Cardiac septum (tissue), 1 donor: ENCODE measurements at regions of chr2 and their contacts with region 1.

Region 1: GRCh38 chr2:100242891-100243619 is 79.2 kb downstream of the LONRF2 start:
- DNase-seq: peak; percentile 82

Region 2: DNA sequence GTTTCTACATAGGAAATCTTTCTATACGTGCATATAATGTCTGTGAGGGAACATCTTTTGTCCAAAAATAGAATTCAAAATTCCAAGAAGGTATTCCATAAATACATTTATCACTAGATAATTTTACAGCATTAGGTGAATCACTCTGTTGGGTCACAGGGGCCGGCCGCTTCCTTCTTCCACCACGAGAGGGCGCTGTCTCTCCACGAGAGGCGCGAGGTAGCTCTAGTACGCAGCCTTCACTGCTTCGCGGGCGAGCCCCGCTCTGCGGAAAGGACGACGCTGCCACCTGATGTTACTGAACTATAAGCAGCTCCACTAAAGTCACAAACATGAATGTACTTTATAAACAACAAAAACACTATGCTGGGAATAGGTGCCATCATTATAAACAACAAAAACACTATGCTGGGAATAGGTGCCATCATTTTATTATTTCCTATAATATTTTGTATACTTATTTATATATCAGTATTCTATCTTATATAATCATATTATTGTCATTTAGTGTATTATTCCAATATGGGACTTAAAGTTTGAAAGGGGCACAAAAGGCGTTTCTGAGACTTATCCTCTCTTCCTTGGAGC is 683.9 kb before region 1 on chr2:
- intact Hi-C with region 1: loop called (anchors 1 kb)
- DNase-seq: peak; percentile 94

Region 3: DNA sequence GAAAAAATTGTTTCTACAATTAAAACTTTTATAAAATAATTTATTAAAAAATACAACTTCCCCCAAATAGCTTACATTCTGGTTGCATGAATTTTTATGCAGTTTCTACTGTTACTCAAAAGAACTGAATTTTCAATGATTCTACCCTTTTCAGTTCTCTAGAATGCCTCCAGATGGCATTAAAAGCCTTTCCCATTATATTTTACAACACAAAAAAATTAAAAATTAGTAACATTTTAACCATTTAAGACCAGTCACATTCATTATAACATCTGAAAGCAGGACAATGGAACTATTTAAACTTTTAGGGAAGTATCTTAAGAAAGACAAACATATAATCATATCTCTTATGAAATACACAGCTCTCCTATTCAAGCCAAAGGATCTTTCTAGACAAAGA is 517.2 kb before region 1 on chr2:
- intact Hi-C with region 1: loop called (anchors 2 kb)
- DNase-seq: no peak

Region 4: GRCh38 chr2:99818842-99819241 is 424.2 kb before region 1 on chr2:
- intact Hi-C with region 1: loop called (anchors 5 kb)
- DNase-seq: no peak

Region 5: DNA sequence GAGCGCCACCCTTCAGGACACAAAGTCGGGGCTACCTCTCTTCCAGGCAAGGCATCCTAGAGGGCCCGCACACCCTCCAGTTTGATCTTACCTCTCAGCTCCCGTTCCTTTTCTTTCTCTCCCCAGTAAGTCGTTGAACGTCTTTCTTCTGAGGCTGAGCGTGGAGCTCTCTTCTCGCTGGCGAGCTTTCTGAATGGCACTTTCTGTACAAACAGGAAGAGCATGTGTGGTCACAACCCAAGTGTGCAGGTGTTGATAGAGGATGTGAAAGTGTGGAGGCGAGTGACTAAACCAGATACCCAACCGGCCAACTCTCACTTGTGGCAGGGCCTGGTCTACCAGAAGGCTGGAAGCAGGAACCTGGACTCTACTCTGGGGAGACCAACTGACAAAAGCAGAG is 100.7 kb before region 1 on chr2 and contains the start of gene AFF3:
- intact Hi-C with region 1: no loop called
- DNase-seq: no peak
- total RNA-seq, gene AFF3: 6.7 TPM

Region 6: DNA sequence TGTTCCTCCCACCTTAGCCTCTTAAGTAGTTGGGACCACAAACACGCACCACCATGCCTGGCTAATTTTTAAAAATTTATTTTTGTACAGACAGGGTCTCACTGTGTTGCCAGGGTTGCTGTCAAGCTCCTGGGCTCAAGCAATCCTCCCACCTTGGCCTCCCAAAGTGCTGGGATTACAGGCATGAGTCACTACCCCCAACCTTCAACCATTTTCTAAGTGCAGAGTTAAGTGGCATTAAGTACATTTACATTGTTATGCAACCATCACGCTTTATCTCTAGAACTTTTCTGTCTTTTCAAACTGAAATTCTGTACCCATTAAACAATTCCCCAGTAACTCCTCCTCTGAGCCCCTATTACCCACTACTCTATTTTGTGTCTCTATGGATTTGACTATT is 54.7 kb before region 1 on chr2:
- intact Hi-C with region 1: loop called (anchors 5 kb)
- DNase-seq: no peak

Region 7: GRCh38 chr2:100309973-100310719 is 67.1 kb after region 1 on chr2:
- intact Hi-C with region 1: no loop called
- DNase-seq: no peak